ENCODE measurements at regions of chr19 and their contacts with region 1.

Region 1: DNA sequence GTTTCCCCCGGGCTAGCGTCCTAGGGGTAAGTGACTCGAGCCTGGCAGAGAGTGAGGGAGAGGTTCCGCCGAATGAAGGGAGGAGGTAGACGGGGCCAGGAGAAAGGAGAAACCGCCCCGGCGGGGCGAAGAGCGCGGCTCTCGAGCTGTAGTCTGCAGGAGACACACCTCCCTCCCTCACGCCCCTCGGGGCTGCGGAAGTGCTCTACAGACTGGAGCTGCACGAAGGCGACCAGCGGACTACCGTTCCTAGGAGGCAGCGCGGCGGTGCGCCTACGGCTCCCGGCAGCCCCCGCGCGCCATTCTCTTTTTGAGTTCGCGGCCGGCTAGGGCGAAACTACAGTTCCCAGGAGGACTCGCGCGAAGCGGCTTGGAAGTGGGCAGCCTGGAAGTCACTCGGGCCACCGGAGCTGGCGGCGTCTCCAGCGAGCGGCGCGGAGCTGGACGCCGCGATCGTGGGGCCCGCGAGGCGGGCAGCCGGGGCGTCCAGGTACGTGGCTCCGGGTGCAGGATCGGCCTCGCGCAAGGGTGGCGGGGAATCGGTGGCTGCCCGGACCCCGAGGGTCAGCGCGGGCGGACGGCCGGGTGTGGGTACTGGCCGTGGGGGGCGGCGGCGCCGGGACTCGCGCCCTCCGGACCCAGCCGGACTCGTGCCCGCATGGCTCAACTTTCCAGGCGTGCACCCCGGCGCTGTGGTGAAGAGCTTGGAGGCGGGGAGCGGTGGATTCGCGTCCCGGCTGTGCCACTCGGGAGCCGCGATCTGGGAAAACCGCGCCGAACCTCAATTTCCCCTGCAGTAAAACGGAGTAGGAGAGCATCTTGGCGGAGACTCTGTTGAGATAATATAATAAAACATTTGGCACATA is at the start of gene SIPA1L3:
- DNase-seq: peak; percentile 98
- H3K4me3 Mint-ChIP-seq: peak within 1 kb of the TSS; percentile 98
- H3K27ac Mint-ChIP-seq: peak within 1 kb of the TSS; percentile 87
- H3K4me1 Mint-ChIP-seq: peaks cover 22% of the 10 kb centered on the region
- H3K27me3 Mint-ChIP-seq: no peaks in the 10 kb centered on the region
- CTCF ChIP-seq: no peak
- total RNA-seq, gene SIPA1L3: 115 and 127 TPM in 2 replicates

Region 2: GRCh38 chr19:37885392-37885791 is 21.7 kb before region 1 on chr19:
- CTCF ChIA-PET with region 1: no interaction called
- intact Hi-C with region 1: no loop called
- DNase-seq: no peak
- H3K4me3 Mint-ChIP-seq: no peak overlapping the region
- H3K27ac Mint-ChIP-seq: no peak overlapping the region
- H3K4me1 Mint-ChIP-seq: no peaks in the 10 kb centered on the region
- H3K27me3 Mint-ChIP-seq: no peaks in the 10 kb centered on the region
- CTCF ChIP-seq: no peak

Region 3: GRCh38 chr19:37931881-37932655 is 25.0 kb after region 1 on chr19:
- CTCF ChIA-PET with region 1: interaction called, 40 read pairs
- intact Hi-C with region 1: loop called (anchors 2 kb)
- DNase-seq: peak; percentile 98
- H3K4me3 Mint-ChIP-seq: peak overlapping the region; percentile 93
- H3K27ac Mint-ChIP-seq: peak overlapping the region; percentile 91
- H3K4me1 Mint-ChIP-seq: peaks cover 71% of the 10 kb centered on the region
- H3K27me3 Mint-ChIP-seq: no peaks in the 10 kb centered on the region
- CTCF ChIP-seq: no peak

Region 4: GRCh38 chr19:38013913-38014575 is 106.9 kb after region 1 on chr19:
- CTCF ChIA-PET with region 1: interaction called, 4 read pairs
- intact Hi-C with region 1: loop called (anchors 10 kb)
- DNase-seq: no peak
- H3K4me3 Mint-ChIP-seq: no peak overlapping the region
- H3K27ac Mint-ChIP-seq: no peak overlapping the region
- H3K4me1 Mint-ChIP-seq: peaks cover 10% of the 10 kb centered on the region
- H3K27me3 Mint-ChIP-seq: no peaks in the 10 kb centered on the region
- CTCF ChIP-seq: no peak

Region 5: GRCh38 chr19:38031076-38031770 is 124.1 kb after region 1 on chr19:
- CTCF ChIA-PET with region 1: no interaction called
- intact Hi-C with region 1: no loop called
- DNase-seq: no peak
- H3K4me3 Mint-ChIP-seq: no peak overlapping the region
- H3K27ac Mint-ChIP-seq: no peak overlapping the region
- H3K4me1 Mint-ChIP-seq: peaks cover 9% of the 10 kb centered on the region
- H3K27me3 Mint-ChIP-seq: no peaks in the 10 kb centered on the region
- CTCF ChIP-seq: no peak

Region 6: DNA sequence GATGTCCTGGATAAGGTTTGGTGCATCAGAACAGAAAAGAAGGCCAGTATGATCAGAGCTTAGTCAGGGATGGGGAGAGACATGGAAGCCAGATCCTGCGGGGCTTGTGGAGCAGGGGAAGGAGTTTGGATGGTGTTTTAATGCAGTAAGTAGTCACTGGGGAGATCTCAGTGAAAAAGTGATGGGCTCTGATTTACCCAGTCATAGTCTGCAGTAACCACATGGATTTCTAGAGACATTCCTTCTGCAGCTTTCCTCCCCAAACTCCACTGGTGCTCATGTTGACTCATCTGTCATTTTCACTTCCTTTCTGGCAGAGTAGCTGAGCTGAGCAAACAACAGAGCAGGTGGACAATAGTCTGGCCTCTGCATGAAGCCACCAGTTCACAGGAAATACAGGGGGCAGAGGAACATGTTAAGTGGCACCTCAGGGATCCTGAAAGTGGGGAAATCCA is 172.9 kb after region 1 on chr19:
- CTCF ChIA-PET with region 1: interaction called, 14 read pairs
- intact Hi-C with region 1: loop called (anchors 5 kb)
- DNase-seq: peak; percentile 57
- H3K4me3 Mint-ChIP-seq: no peak overlapping the region
- H3K27ac Mint-ChIP-seq: peak overlapping the region; percentile 53
- H3K4me1 Mint-ChIP-seq: peaks cover 17% of the 10 kb centered on the region
- H3K27me3 Mint-ChIP-seq: no peaks in the 10 kb centered on the region
- CTCF ChIP-seq: no peak

Region 7: GRCh38 chr19:38142176-38143035 is 235.3 kb after region 1 on chr19:
- CTCF ChIA-PET with region 1: interaction called, 17 read pairs
- intact Hi-C with region 1: no loop called
- DNase-seq: peak; percentile 58
- H3K4me3 Mint-ChIP-seq: no peak overlapping the region
- H3K27ac Mint-ChIP-seq: no peak overlapping the region
- H3K4me1 Mint-ChIP-seq: no peaks in the 10 kb centered on the region
- H3K27me3 Mint-ChIP-seq: no peaks in the 10 kb centered on the region
- CTCF ChIP-seq: peak; percentile 62

Measured in Calu3 (cell line).